Activated T-helper 2 cell treated with anti-CD3 and anti-CD28 coated beads, Interferon-gamma antibody, Interleukin-2, Interleukin-4, amounts not matched to agents 10 μg/mL and 5 μg/mL and 100 μg/mL, durations not matched to agents 14 hours and 24 hours and 36 hours (primary cell): ENCODE measurements at regions of chr9 and their contacts with region 1.

Region 1: GRCh38 chr9:27732494-27732893 is 159.2 kb upstream of the C9orf72 start:
- DNase-seq: no peak
- H3K4me3 Mint-ChIP-seq: no peak overlapping the region
- H3K27ac Mint-ChIP-seq: peak overlapping the region; percentile 58
- H3K4me1 Mint-ChIP-seq: peaks cover 25% of the 10 kb centered on the region
- H3K27me3 Mint-ChIP-seq: no peaks in the 10 kb centered on the region

Region 2: GRCh38 chr9:27714388-27714787 is 18.1 kb before region 1 on chr9:
- intact Hi-C with region 1: no loop called
- DNase-seq: no peak
- H3K4me3 Mint-ChIP-seq: no peak overlapping the region
- H3K27ac Mint-ChIP-seq: no peak overlapping the region
- H3K4me1 Mint-ChIP-seq: no peaks in the 10 kb centered on the region
- H3K27me3 Mint-ChIP-seq: peaks cover 6% of the 10 kb centered on the region

Region 3: DNA sequence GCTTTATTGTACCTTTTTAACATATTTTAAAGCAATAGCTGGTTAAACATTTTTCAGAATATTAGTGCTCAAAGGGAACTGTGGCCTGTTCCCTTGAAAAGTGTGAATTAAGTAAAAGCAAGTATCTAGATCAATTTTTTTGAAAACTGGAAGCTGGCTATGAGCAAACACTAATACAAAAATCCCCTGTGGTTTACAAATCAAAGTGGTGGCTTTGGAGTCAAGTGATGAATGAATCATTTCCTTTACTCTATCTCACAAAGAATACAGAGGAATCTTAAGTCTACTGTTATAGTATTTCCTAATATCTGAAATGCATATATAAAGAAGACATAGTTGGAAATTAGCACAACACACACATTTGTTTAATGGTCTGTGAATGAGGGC is 53.2 kb after region 1 on chr9:
- intact Hi-C with region 1: loop called (anchors 1 kb)
- DNase-seq: no peak
- H3K4me3 Mint-ChIP-seq: no peak overlapping the region
- H3K27ac Mint-ChIP-seq: peak overlapping the region; percentile 56
- H3K4me1 Mint-ChIP-seq: peaks cover 16% of the 10 kb centered on the region
- H3K27me3 Mint-ChIP-seq: peaks cover 16% of the 10 kb centered on the region